Dendritic cell treated with granulocyte-macrophage colony-stimulating factor and Interleukin-4, amounts not matched to agents 40 ng/mL and 50 ng/mL, for 4 days (primary cell): ENCODE measurements at regions of chr19 and their contacts with region 1.

Region 1: DNA sequence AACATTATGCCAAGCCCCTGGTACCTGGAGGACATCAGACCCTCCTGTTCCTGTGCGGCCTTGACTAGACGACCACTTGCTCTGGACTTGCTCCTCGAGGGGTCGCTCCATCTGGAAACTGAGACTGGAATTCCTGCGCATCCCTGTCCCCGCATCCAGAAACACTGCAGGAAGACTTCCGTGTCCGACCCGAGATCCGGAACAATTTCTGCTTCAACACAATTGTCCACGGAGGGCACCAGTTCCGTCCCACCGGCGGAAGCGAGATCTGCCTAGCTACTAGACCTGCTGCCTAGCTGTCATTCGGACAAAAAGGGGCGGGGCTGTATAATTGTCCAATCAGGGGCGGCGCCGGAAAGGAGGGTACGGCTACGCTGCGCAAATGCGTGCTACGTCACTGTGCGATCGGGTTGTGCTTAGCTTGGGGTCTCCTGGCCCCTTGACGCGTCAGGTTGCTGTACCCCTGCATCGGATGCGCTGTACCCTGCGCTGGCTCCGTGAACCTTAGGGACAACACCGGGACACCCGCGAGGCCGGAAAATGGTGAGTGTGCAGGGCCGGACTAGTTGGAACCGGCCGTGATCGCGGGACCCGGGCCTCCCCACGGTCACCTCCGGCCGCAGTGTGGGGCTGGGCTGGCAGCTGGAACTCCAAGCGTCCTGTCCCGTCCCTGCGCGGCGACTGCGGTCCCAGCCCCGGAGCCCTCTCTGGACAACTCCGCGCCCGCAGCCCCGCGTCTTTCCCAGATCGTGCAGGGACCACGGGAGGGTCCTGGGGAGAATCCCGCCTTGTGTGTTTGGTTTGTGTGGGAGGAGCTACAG is at the starts of genes ZNF490 and ZNF791:
- H3K4me3 Mint-ChIP-seq: peak within 1 kb of the TSS; percentile 98
- H3K27ac Mint-ChIP-seq: peak within 1 kb of the TSS; percentile 97
- H3K4me1 Mint-ChIP-seq: peaks cover 39% of the 10 kb centered on the region
- H3K27me3 Mint-ChIP-seq: no peaks in the 10 kb centered on the region

Region 2: GRCh38 chr19:12564016-12564664 is 46.6 kb before region 1 on chr19:
- intact Hi-C with region 1: loop called (anchors 5 kb)
- H3K4me3 Mint-ChIP-seq: no peak overlapping the region
- H3K27ac Mint-ChIP-seq: no peak overlapping the region
- H3K4me1 Mint-ChIP-seq: no peaks in the 10 kb centered on the region
- H3K27me3 Mint-ChIP-seq: peaks cover 3% of the 10 kb centered on the region

Region 3: DNA sequence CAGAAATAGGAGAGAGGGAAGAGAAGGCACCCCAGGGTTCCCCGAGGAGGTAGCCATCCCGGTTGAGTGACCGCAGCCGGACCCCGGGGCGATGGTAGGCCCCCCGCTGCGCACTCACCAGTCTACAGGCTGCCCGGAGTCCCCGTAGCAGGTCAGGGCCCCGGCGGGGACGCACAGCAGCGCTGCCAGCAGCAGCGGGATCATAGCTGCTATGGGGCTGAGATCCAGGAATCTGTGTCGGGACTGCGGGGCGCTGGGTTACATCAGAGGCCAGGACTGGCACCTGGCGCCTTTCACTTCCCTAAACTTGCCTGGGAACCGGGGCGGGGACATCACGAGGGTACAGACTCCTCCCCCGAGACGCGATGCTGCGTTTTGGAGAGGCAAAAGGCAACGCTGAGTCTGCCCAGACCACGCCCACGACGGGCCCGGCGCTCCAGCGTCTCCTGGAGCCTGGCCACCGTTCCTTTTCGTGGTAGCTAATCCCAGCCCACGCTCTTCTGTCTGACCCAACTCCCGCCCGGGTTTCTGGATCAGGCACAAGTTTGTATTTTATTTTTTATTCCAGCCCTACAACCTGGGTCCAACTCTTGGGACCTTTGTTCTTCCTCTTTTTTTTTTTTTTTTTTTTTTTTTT is 270.5 kb after region 1 on chr19 and contains the start of gene DNASE2:
- intact Hi-C with region 1: no loop called
- H3K4me3 Mint-ChIP-seq: peak within 1 kb of the TSS; percentile 75
- H3K27ac Mint-ChIP-seq: peak within 1 kb of the TSS; percentile 97
- H3K4me1 Mint-ChIP-seq: peaks cover 67% of the 10 kb centered on the region
- H3K27me3 Mint-ChIP-seq: peaks cover 9% of the 10 kb centered on the region